Dendritic cell treated with granulocyte-macrophage colony-stimulating factor and Interleukin-4, amounts not matched to agents 40 ng/mL and 50 ng/mL, for 4 days (primary cell): ENCODE measurements at regions of chr4 and their contacts with region 1.

Region 1: DNA sequence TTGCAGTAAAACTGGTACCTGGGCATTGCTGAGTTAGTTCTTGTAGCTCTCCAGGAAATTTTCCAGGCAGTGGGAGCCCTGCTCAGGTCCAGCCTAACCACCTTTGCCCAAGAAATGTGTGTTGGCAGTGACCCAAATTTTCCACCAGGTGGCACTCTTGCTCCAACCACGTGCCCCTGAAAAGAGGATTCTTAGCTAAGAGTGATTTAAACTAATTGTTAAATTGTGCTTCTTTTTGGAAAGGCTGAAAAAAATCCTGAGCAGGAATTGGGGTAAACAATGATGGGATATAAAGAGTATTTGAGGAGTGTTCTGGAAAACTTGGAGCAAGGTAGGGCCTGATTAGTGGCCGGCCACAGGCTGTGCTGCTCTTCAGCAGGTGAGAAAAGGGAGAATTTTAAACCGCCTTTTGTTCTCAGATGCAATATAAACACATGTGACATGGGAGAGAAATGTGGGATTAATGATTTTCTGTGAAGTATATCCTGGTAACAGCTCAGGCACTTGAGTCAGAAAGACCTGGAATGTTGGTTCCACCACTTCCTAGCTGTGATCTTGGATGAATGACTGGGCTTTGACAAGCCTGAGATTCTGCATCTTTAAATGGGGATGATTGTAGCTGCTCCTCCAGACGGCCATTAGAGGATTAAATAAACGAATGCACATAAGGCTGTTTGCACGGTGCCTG is 219.6 kb downstream of the PTTG2 start:
- H3K4me3 Mint-ChIP-seq: no peak overlapping the region
- H3K27ac Mint-ChIP-seq: no peak overlapping the region
- H3K4me1 Mint-ChIP-seq: peaks cover 47% of the 10 kb centered on the region
- H3K27me3 Mint-ChIP-seq: peaks cover 2% of the 10 kb centered on the region

Region 2: DNA sequence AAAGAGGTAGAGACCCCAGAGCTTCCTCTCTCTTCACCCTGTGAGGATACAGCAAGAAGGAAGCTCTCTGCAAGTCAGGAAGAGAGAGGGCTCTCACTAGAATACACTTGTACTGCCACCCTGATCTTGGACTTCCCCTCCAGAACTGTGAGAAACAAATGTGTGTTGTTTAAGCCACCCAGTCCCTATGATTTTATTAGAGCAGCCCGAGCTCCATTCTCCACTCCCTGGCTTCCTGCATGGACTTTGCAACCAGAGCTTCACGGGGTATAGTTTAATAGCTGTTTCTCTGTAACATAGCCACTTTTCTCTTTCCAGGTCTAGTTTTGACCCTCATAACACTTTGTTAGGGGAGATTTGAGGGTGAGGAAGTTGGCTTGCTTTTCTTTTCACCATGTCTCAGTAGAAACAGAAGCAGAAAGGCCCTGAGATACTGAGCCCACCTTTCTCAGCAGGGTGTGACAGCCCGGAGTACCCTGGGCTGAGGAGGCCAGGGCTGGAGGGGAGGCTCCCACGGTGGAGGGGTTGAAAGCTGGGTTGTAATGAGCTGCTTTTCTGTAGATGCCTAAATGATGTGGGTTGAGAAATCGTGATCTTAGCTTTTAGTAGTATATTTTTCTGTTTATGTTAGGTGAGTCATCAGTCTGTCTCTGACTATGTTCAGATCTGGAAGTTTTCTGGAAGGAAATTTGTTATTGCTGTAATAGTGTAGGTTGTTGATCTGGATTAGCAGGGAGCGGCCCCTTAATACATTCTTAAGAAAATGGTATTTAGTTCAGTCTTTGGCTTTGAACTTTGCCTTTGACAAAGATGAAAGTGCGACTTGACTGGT is 101.0 kb before region 1 on chr4:
- intact Hi-C with region 1: loop called (anchors 5 kb)
- H3K4me3 Mint-ChIP-seq: peak overlapping the region; percentile 61
- H3K27ac Mint-ChIP-seq: peak overlapping the region; percentile 91
- H3K4me1 Mint-ChIP-seq: peaks cover 91% of the 10 kb centered on the region
- H3K27me3 Mint-ChIP-seq: no peaks in the 10 kb centered on the region

Region 3: GRCh38 chr4:38730830-38731646 is 551.2 kb after region 1 on chr4:
- intact Hi-C with region 1: loop called (anchors 1 kb)
- H3K4me3 Mint-ChIP-seq: no peak overlapping the region
- H3K27ac Mint-ChIP-seq: peak overlapping the region; percentile 39
- H3K4me1 Mint-ChIP-seq: peaks cover 42% of the 10 kb centered on the region
- H3K27me3 Mint-ChIP-seq: no peaks in the 10 kb centered on the region